ENCODE measurements at regions of chr3 and their contacts with region 1.

Region 1: GRCh38 chr3:37608061-37608702 is 253.5 kb upstream of the CTDSPL start:
- DNase-seq: no peak
- H3K4me3 ChIP-seq: no peak overlapping the region
- CTCF ChIP-seq: no peak
- POLR2A ChIP-seq: no peak

Region 2: DNA sequence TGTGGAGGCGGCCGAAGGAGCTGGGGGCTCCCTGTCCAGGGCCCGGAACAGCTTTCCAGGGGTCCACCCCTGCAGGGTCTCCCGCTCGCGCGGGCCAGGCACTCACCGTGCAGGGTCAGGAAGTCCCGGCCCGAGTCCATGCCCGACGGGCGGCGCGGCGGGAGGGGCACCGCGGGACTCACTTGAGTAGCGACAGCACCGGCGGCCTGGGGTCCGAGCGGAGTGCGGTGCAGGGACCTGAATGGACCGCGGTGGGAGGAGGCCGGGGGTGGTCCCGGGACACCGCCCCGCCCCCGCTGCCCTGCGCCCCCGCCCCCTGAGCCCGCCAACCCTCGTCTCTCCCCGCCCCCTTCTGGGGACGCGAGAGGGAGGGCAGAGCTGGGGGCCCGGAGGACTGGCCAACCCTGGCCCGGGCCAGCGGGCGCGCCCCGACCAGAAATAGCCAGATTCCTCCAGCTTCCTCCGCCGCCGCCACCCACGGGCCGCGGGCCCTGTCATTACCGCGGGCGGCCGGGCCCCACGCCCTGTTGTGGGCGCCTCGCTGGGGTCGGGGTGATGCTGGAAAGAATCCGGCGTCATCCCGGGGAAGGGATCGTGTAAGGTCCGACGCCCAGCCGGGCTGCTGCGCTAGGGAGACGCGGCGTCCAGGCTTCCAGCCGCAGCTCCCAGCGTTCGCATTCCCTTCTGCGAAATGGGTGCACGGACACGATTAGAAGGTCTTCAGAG is 421.4 kb after region 1 on chr3 and contains the start of gene PLCD1:
- intact Hi-C with region 1: no loop called
- DNase-seq: peak; percentile 81 to 97
- H3K4me3 ChIP-seq: peak within 1 kb of the TSS; percentile 53
- CTCF ChIP-seq: no peak
- POLR2A ChIP-seq: no peak
- total RNA-seq, gene PLCD1: 30.2 to 55.4 (median 43.8) TPM

Region 3: DNA sequence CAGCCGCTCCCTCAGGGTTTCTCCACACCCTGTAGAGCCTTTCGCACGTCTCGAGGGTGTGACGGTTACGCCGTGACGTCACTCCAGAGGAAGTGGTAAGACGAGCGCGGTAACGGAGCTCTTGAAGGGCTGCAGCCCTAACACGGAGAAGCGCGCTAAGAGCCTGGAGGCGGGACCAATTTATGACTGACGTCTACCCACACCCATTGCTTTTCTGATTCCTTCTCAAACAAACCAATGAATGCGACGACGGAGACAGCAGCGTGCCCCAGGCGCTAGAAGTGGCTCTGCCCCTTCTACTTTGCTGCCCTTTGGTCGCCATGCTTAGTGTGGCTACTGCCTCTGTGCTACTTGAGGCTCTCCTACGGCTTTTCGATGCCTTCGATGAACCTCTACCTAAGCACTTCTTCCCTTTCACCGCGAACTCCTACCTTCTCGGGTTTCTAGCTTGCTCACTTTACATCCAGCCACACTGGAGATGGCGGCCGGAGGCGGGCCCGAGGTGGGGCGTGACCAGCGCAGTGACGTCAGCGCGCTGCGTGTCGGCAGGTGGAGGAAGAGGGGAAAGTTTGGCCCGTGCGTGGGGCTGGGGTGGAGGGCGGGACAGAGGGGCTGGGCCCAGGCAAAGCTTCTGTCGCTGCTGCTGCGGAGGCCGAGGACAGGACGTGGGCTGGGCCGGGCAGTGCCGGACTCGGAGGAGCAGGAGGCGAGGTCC is 556.9 kb after region 1 on chr3 and contains the start of gene OXSR1:
- intact Hi-C with region 1: loop called (anchors 5 kb)
- DNase-seq: peak; percentile 100
- H3K4me3 ChIP-seq: peak within 1 kb of the TSS; percentile 94
- CTCF ChIP-seq: peak in 1 of 3 donors; percentile 6
- POLR2A ChIP-seq: peak in 1 of 2 donors; percentile 39
- total RNA-seq, gene OXSR1: 23.4 to 36.1 (median 31.6) TPM